ENCODE measurements at regions of chr6 and their contacts with region 1.

Region 1: DNA sequence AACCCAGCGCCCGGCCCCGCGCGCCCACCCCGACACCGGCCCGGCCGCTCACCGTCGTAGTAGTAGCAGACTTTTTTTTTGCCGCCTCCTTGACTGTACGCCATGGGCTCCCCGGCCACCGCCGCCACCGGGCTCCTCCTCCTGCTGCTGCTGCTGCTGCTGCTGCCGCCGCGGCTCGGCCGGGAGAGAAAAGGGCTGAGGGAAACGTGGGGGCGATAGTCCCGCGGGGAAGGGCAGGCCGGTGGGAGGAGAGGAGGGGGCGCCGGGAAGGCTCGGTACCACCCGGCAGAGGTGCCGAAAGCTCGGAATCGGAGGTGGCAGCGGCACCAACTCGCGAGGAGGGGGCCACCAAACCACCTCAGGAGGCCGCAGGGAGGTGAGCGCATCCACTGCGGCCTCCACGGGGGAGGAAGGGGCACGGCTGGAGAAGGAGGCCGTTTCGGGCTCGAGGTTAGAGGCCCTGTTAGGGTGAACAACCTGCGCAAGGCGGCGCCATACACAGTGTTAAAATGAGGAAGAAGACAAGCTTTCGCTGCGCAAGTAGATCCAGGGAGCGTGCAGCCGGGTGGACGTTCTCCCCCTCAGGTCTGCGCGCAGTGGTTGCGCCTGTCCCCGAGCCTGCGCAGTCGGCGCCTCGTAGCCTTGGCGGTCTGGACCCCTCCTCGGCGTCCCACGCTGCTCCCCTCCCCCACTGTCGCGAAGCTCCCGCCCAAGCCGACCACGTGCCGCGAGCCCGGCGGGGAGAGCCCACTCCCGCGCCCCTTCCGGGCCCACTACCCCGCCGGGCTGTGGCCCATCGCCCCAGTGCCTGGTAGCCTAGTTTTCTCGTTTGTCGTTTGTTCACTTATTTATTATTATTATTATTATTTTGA is at the start of gene HDAC2:
- DNase-seq: peak; percentile 95
- H3K4me3 ChIP-seq: peak within 1 kb of the TSS; percentile 82
- H3K27ac ChIP-seq: peak within 1 kb of the TSS; percentile 67
- H3K4me1 ChIP-seq: peaks cover 28% of the 10 kb centered on the region
- CTCF ChIP-seq: peak; percentile 44
- total RNA-seq, gene HDAC2: 37.3 and 40.5 TPM in 2 replicates

Region 2: GRCh38 chr6:113980937-113981554 is 10.0 kb after region 1 on chr6:
- CTCF ChIA-PET with region 1: no interaction called
- POLR2A ChIA-PET with region 1: interaction called, 13 read pairs
- intact Hi-C with region 1: no loop called
- DNase-seq: peak; percentile 35
- H3K4me3 ChIP-seq: no peak overlapping the region
- H3K27ac ChIP-seq: no peak overlapping the region
- H3K4me1 ChIP-seq: peaks cover 8% of the 10 kb centered on the region
- CTCF ChIP-seq: peak; percentile 59